CD8-positive, alpha-beta T cell (primary cell): ENCODE measurements at regions of chr14 and their contacts with region 1.

Region 1: DNA sequence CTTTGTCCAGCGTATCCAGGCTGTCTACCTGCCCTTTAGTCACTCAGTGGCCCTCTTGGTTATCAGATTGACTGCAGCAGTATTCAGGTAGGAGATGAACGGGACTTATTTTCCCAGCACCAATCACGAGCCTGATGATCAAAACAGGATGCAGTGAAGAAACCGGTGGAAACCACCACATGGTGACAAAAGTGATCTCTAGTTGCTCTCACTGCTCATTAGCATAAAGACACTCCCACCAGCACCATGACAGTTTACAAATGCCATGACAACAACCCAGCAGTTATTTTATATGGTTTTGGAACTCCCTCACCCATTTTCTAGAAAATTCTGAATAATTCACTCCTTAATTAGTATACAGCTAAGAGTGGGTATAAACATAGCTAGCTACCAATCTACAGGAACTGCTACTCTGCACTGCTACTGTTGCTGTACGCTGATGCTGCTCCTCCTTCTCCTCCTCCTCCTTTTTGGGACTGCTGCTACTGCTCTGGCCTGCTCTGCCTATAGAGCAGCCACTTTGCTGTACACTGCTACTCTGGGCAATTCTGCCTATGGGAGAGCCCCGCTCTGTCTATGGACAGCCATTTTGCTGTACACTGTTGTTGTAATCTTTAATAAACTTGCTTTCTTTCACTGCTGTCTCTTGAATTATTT is 142.5 kb upstream of the SSTR1 start:
- DNase-seq: peak; percentile 31 to 95 (median 58)
- ATAC-seq: peak; percentile 97
- H3K4me3 ChIP-seq: peak overlapping the region; percentile 16
- H3K4me3 Mint-ChIP-seq: peak overlapping the region; percentile 65
- H3K27ac ChIP-seq: peak overlapping the region; percentile 65 to 85
- H3K27ac Mint-ChIP-seq: peak overlapping the region; percentile 93
- H3K4me1 ChIP-seq: peaks cover 36% of the 10 kb centered on the region
- H3K4me1 Mint-ChIP-seq: peaks cover 38% of the 10 kb centered on the region
- H3K27me3 ChIP-seq: peaks cover 0 to 2% of the 10 kb centered on the region in 2 experiments
- H3K27me3 Mint-ChIP-seq: no peaks in the 10 kb centered on the region
- CTCF ChIP-seq: no peak

Region 2: GRCh38 chr14:36320200-36320896 is 1744.9 kb before region 1 on chr14 and contains the start of gene MBIP:
- CTCF ChIA-PET with region 1: no interaction called
- POLR2A ChIA-PET with region 1: no interaction called
- intact Hi-C with region 1: loop called in 1 of 2 experiments (anchors 5 kb)
- DNase-seq: peak; percentile 79 to 97 (median 89)
- ATAC-seq: peak; percentile 96
- H3K4me3 ChIP-seq: peak within 1 kb of the TSS; percentile 86 to 91
- H3K4me3 Mint-ChIP-seq: peak within 1 kb of the TSS; percentile 98
- H3K27ac ChIP-seq: peak within 1 kb of the TSS; percentile 63 to 74
- H3K27ac Mint-ChIP-seq: peak within 1 kb of the TSS; percentile 97
- H3K4me1 ChIP-seq: peaks cover 16% of the 10 kb centered on the region
- H3K4me1 Mint-ChIP-seq: peaks cover 41% of the 10 kb centered on the region
- H3K27me3 ChIP-seq: no peaks in the 10 kb centered on the region
- H3K27me3 Mint-ChIP-seq: peaks cover 5% of the 10 kb centered on the region
- CTCF ChIP-seq: no peak
- total RNA-seq, gene MBIP: 57.4 to 58.1 TPM

Region 3: DNA sequence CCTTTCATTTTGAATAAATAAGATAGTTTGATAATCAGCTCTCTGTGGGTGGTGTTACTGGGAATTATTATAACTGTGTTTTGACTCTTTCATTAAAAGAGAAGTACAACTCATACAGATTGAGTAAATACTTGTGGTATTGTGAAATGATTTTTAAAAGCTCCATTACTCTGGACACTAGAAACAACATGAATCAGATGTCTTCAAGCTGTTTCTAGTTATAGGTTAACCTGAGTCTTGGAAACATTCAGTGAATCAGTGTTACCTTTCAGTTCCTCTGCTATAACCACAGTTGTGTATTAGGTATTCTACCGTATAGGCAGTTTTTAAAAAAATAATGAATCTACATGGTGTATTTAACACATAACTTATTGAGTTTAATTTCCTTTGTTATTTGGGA is 14.0 kb after region 1 on chr14:
- CTCF ChIA-PET with region 1: no interaction called
- POLR2A ChIA-PET with region 1: interaction called, 3 read pairs
- intact Hi-C with region 1: loop called (anchors 1 to 2 kb)
- DNase-seq: no peak
- ATAC-seq: no peak
- H3K4me3 ChIP-seq: no peak overlapping the region
- H3K4me3 Mint-ChIP-seq: peak overlapping the region; percentile 47
- H3K27ac ChIP-seq: no peak overlapping the region
- H3K27ac Mint-ChIP-seq: peak overlapping the region; percentile 85
- H3K4me1 ChIP-seq: peaks cover 53% of the 10 kb centered on the region
- H3K4me1 Mint-ChIP-seq: peaks cover 59% of the 10 kb centered on the region
- H3K27me3 ChIP-seq: no peaks in the 10 kb centered on the region
- H3K27me3 Mint-ChIP-seq: no peaks in the 10 kb centered on the region
- CTCF ChIP-seq: no peak